Right ventricle myocardium inferior (tissue), 1 donor: ENCODE measurements at regions of chr19 and their contacts with region 1.

Region 1: GRCh38 chr19:40425450-40426287 is at the start of gene SERTAD1:
- DNase-seq: peak; percentile 100
- ATAC-seq: peak; percentile 94
- total RNA-seq, gene SERTAD1: 12.0 TPM

Region 2: DNA sequence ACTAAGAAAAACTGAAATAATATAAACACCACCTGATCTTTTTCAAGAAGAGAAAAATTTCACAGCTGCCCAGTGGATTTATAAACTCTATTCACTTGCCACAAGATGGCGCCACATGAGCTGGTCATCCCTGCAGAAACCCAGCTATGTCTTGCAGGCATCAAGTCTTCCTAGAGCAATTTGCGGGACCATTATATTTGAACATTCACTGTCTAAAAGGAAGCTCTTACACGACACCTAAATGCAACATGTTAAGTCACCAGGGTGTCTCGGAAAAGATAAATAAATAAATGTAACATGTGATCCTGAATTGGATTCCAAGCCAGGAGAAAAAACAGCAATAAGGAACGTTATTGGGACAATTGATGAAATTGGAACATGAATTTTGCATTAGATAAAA is 120.3 kb before region 1 on chr19:
- intact Hi-C with region 1: no loop called
- DNase-seq: no peak
- ATAC-seq: no peak

Region 3: GRCh38 chr19:40348125-40348913 is 77.3 kb before region 1 on chr19 and contains the starts of genes C19orf47 and PLD3:
- intact Hi-C with region 1: loop called (anchors 5 kb)
- DNase-seq: peak; percentile 100
- ATAC-seq: peak; percentile 99
- total RNA-seq, gene C19orf47: 222 TPM
- total RNA-seq, gene PLD3: 169 TPM

Region 4: DNA sequence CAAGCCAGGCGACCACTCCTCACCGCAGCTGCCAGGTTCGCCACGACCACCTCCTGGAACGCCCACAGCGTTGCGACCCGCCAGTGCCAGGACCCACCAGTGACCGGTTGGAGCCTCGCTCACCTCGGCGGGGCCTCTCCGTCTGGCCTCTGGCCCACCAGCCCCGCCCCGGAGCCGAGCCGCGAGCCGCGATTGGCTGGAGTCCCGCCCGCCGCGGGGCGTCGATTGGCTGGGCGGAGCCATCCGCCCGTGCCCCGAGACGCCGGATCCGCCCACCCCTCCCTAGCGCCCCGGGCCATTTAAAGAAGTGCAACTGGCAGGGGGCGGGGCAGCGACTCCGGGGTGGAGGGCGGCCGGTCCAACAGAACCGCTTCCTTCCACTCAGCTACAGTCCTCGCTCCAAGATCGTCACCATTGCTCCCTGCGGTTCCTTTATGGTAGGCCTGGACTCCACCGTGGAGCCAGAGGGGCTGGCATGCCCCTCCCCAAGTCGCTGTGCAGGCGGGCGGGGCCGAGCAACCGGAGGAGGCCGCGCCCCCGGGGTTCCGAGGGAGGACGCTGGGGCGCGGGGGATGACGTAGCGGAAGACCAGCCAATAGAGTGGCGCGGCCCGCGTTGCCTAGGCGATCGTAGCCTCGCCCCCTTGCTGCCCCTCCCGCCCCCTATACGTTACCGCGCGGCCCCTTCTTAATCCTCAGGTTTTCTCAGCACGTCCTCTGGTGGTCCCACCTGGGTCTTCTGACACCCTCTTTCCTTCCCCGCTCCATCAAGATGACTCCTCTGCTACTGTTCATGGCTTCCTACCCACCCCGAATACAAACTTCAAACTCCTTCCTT is 18.7 kb after region 1 on chr19 and contains the start of gene SERTAD3:
- intact Hi-C with region 1: loop called (anchors 1 kb)
- DNase-seq: peak; percentile 99
- ATAC-seq: peak; percentile 84
- total RNA-seq, gene SERTAD3: 28.2 TPM